Panc1 (cell line): ENCODE measurements at regions of chr14 and their contacts with region 1.

Region 1: DNA sequence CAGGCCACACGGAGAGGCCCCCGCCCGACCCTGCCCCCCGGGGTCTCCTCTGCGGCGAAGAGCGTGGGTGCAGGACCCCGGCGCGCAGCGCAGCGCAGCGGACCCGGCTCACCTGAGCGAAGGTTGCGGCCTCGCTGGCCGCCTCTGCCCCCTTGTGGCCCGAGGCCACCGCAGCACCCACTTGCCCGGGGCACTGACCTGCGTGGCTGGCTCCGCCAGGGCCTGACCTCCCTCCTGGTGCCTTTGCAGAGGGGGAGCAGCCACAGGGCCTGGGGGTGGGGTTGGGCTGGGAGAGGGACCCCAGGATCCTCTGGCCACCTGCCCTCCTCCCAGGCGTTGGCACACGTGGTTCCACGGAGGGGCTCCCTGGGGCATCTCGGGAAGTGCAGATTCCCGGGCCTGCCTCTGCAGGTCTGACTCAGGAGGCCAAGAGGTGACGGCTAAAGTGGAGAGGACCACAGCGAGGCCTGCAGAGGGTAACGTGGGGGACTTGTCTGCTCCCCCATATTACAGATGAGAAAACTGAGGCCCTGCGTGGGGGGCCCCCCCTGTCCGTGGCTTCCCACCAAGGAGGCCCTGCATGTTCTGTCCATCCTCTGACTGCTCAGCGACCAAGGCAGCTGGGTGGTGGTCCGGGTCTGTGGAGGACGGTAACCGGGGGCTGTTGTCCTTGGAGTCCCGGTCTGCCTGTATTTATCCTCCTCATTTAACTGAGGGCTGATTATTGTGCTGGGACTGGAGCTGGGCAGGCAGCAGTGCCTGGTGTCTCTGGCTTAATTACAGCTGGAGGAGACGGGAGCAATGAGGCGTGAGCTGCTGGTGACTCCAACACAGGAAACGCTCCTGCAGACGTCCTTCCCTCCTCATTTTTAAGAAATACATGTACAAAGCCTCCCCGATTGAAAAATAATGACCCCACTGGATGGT is 67.9 kb upstream of the BEGAIN start:
- DNase-seq: no peak
- ATAC-seq: peak; percentile 79
- H3K4me3 ChIP-seq: peak overlapping the region; percentile 15 to 23
- H3K27ac ChIP-seq: peak overlapping the region; percentile 75
- H3K4me1 ChIP-seq: peaks cover 34% of the 10 kb centered on the region
- H3K27me3 ChIP-seq: no peaks in the 10 kb centered on the region
- CTCF ChIP-seq: peak; percentile 90

Region 2: DNA sequence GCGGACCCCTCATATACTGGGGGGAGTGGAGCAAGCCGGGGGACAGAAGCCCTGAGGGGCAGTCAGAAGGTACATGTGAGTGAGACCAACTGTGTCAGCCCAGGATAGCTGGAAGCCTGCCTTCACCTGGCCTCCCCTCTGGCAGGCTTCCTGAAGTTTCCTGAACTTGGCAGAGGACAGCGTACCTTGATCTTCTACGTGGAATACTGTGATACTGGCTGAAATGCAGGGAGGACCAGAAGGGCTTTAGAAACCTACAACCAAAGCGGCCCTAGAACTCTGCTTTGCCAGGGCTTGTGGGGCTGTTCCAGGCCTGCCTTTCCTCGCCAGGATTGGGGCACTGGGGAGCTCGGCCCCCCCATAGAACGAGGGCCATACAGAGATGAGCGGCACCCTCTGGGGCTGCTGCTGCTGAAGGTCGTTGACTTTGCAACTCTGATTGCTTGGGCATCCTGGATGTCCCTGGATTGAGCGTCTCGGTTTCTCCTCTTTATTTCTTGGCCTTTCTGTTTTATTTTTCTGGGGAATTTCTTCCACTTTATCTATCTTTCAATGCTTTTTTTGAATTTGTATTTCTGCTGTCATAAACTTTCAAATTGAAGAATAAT is 265.5 kb before region 1 on chr14:
- CTCF ChIA-PET with region 1: interaction called, 5 read pairs
- POLR2A ChIA-PET with region 1: no interaction called
- in situ Hi-C with region 1: no loop called
- intact Hi-C with region 1: loop called (anchors 1 kb)
- DNase-seq: no peak
- ATAC-seq: peak; percentile 26; the same call in 1 of the 2 replicates
- H3K4me3 ChIP-seq: no peak overlapping the region
- H3K27ac ChIP-seq: peak overlapping the region; percentile 86
- H3K4me1 ChIP-seq: peaks cover 54% of the 10 kb centered on the region
- H3K27me3 ChIP-seq: no peaks in the 10 kb centered on the region
- CTCF ChIP-seq: no peak

Region 3: DNA sequence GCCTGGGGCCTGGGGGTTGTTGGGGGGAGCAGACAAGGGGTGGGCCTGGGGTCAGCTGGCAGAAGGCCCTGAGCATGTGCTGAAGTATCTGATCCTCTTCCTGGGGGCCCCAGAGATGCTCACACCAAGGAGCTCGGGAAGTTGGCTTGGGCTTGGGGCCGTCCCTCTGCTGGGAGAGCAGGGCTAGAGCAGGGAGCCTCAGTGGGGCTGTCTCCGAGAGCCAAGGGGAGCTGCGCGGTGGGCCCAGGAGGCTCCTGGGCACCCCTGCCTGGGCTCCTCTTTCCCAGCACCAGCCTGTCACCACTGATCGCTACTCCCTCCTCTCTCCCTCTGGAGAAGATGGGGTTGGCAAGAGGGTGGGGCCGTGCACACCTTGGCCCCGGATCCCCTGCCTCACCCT is 96.1 kb before region 1 on chr14:
- CTCF ChIA-PET with region 1: interaction called, 14 read pairs
- POLR2A ChIA-PET with region 1: no interaction called
- in situ Hi-C with region 1: no loop called
- intact Hi-C with region 1: no loop called
- DNase-seq: no peak
- ATAC-seq: no peak
- H3K4me3 ChIP-seq: no peak overlapping the region
- H3K27ac ChIP-seq: no peak overlapping the region
- H3K4me1 ChIP-seq: peaks cover 37% of the 10 kb centered on the region
- H3K27me3 ChIP-seq: no peaks in the 10 kb centered on the region
- CTCF ChIP-seq: no peak

Region 4: GRCh38 chr14:100677554-100678468 is 22.7 kb after region 1 on chr14:
- CTCF ChIA-PET with region 1: no interaction called
- POLR2A ChIA-PET with region 1: no interaction called
- in situ Hi-C with region 1: no loop called
- intact Hi-C with region 1: no loop called
- DNase-seq: no peak
- ATAC-seq: peak; percentile 53; the same call in 1 of the 2 replicates
- H3K4me3 ChIP-seq: no peak overlapping the region
- H3K27ac ChIP-seq: peak overlapping the region; percentile 71; the same call in 1 of the 2 replicates
- H3K4me1 ChIP-seq: peaks cover 59% of the 10 kb centered on the region
- H3K27me3 ChIP-seq: no peaks in the 10 kb centered on the region
- CTCF ChIP-seq: no peak

Region 5: GRCh38 chr14:100864960-100865681 is 210.0 kb after region 1 on chr14:
- CTCF ChIA-PET with region 1: no interaction called
- POLR2A ChIA-PET with region 1: no interaction called
- in situ Hi-C with region 1: no loop called
- intact Hi-C with region 1: no loop called
- DNase-seq: no peak
- ATAC-seq: no peak
- H3K4me3 ChIP-seq: no peak overlapping the region
- H3K27ac ChIP-seq: no peak overlapping the region
- H3K4me1 ChIP-seq: no peaks in the 10 kb centered on the region
- H3K27me3 ChIP-seq: no peaks in the 10 kb centered on the region
- CTCF ChIP-seq: no peak